ENCODE measurements at regions of chr7 and their contacts with region 1.

Region 1: GRCh38 chr7:50206453-50207250 is 97.9 kb upstream of the IKZF1 start:
- DNase-seq: peak; percentile 46 to 89 (median 78)
- ATAC-seq: peak; percentile 74
- H3K4me3 ChIP-seq: peak overlapping the region in 1 of 2 experiments; percentile 12
- H3K4me3 Mint-ChIP-seq: peak overlapping the region; percentile 80
- H3K27ac ChIP-seq: peak overlapping the region; percentile 3 to 37
- H3K27ac Mint-ChIP-seq: peak overlapping the region; percentile 92
- H3K4me1 ChIP-seq: peaks cover 74% of the 10 kb centered on the region
- H3K4me1 Mint-ChIP-seq: peaks cover 76% of the 10 kb centered on the region
- H3K27me3 ChIP-seq: no peaks in the 10 kb centered on the region
- H3K27me3 Mint-ChIP-seq: no peaks in the 10 kb centered on the region
- CTCF ChIP-seq: no peak

Region 2: DNA sequence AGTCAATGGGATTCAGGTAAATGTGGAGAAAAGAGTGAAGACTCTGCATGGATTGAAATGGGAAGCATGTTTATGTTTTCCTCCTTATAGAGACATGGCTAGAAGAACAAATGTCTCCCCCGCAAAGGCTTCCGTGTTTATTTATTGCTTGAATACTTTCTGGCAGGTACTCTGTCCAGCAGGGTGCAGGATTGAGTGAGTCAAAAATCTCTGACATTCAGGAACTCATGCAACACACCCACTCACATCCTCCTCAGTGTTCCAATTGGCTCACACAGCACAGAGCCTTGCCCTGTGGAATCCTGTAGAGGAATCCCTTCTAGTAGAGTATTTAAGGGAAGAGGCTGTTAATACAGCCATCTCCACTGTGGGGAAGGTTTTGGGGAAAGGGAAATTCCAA is 723.5 kb before region 1 on chr7:
- CTCF ChIA-PET with region 1: no interaction called
- POLR2A ChIA-PET with region 1: no interaction called
- intact Hi-C with region 1: no loop called
- DNase-seq: no peak
- ATAC-seq: no peak
- H3K4me3 ChIP-seq: no peak overlapping the region
- H3K4me3 Mint-ChIP-seq: no peak overlapping the region
- H3K27ac ChIP-seq: no peak overlapping the region
- H3K27ac Mint-ChIP-seq: no peak overlapping the region
- H3K4me1 ChIP-seq: no peaks in the 10 kb centered on the region
- H3K4me1 Mint-ChIP-seq: no peaks in the 10 kb centered on the region
- H3K27me3 ChIP-seq: no peaks in the 10 kb centered on the region
- H3K27me3 Mint-ChIP-seq: no peaks in the 10 kb centered on the region
- CTCF ChIP-seq: no peak

Region 3: GRCh38 chr7:50142425-50143017 is 64.1 kb before region 1 on chr7:
- CTCF ChIA-PET with region 1: interaction called, 19 read pairs
- POLR2A ChIA-PET with region 1: interaction called, 5 read pairs
- intact Hi-C with region 1: loop called (anchors 1 to 2 kb)
- DNase-seq: peak in 4 of 9 experiments; percentile 38 to 78 (median 59)
- ATAC-seq: peak; percentile 85
- H3K4me3 ChIP-seq: no peak overlapping the region
- H3K4me3 Mint-ChIP-seq: peak overlapping the region; percentile 57
- H3K27ac ChIP-seq: no peak overlapping the region
- H3K27ac Mint-ChIP-seq: peak overlapping the region; percentile 84
- H3K4me1 ChIP-seq: peaks cover 5% of the 10 kb centered on the region
- H3K4me1 Mint-ChIP-seq: peaks cover 15% of the 10 kb centered on the region
- H3K27me3 ChIP-seq: no peaks in the 10 kb centered on the region
- H3K27me3 Mint-ChIP-seq: no peaks in the 10 kb centered on the region
- CTCF ChIP-seq: peak; percentile 91

Region 4: GRCh38 chr7:50281680-50282445 is 75.2 kb after region 1 on chr7:
- CTCF ChIA-PET with region 1: interaction called, 18 read pairs
- POLR2A ChIA-PET with region 1: no interaction called
- intact Hi-C with region 1: loop called in 1 of 2 experiments (anchors 5 kb)
- DNase-seq: peak in 2 of 9 experiments; percentile 38 to 65
- ATAC-seq: peak; percentile 81
- H3K4me3 ChIP-seq: peak overlapping the region in 1 of 2 experiments; percentile 30
- H3K4me3 Mint-ChIP-seq: peak overlapping the region; percentile 80
- H3K27ac ChIP-seq: peak overlapping the region; percentile 45 to 62
- H3K27ac Mint-ChIP-seq: peak overlapping the region; percentile 96
- H3K4me1 ChIP-seq: peaks cover 53% of the 10 kb centered on the region
- H3K4me1 Mint-ChIP-seq: peaks cover 57% of the 10 kb centered on the region
- H3K27me3 ChIP-seq: no peaks in the 10 kb centered on the region
- H3K27me3 Mint-ChIP-seq: no peaks in the 10 kb centered on the region
- CTCF ChIP-seq: no peak

Region 5: GRCh38 chr7:50317221-50317678 is 110.6 kb after region 1 on chr7:
- CTCF ChIA-PET with region 1: interaction called, 186 read pairs
- POLR2A ChIA-PET with region 1: interaction called, 32 read pairs
- intact Hi-C with region 1: loop called in 1 of 2 experiments (anchors 1 kb)
- DNase-seq: peak in 4 of 9 experiments; percentile 54 to 93 (median 83)
- ATAC-seq: peak; percentile 72
- H3K4me3 ChIP-seq: peak overlapping the region; percentile 21 to 52
- H3K4me3 Mint-ChIP-seq: peak overlapping the region; percentile 26
- H3K27ac ChIP-seq: peak overlapping the region; percentile 91 to 96
- H3K27ac Mint-ChIP-seq: peak overlapping the region; percentile 96
- H3K4me1 ChIP-seq: peaks cover 98% of the 10 kb centered on the region
- H3K4me1 Mint-ChIP-seq: peaks cover 95% of the 10 kb centered on the region
- H3K27me3 ChIP-seq: no peaks in the 10 kb centered on the region
- H3K27me3 Mint-ChIP-seq: no peaks in the 10 kb centered on the region
- CTCF ChIP-seq: no peak

Region 6: DNA sequence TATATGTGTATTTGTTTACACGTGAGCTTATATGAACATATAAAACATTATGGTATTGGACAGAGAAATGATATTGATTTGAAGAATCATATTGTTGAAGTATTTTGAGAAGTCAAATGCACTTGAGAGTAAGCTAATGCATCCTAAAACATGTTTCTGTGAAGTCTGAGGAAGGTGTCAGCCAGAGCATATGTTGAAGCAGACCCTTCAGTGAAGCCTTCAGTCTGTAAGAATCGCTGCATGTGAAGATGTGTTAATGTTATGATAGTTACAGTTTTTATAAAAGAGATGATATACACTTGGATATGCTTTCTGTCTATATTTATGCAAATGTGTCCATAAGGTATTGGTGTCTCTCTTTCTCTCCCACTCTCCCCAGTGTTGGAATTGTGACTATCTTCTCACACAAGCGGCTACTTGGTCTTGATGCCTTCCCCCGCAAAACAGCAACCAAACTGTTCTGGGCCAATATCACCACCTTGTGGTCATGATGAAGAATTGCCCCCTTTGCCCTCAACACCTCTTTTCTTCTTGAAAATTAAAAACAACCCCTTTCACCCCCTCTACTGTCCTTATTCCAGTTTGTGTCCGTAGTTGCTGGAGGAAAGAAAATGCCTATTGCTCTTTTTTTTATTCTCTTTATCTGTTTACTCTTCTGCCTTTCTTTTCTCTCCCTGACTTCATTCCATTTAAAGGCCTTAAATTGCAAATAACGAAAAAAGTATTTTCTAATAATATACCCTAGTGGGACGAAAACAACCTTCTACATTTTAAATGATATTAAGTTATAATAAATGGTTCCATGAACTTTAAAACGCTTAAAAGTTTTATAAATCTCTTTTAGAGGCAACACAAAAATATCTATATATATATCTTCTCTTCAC is 162.7 kb after region 1 on chr7:
- CTCF ChIA-PET with region 1: interaction called, 339 read pairs
- POLR2A ChIA-PET with region 1: interaction called, 51 read pairs
- intact Hi-C with region 1: loop called (anchors 1 kb)
- DNase-seq: peak in 4 of 9 experiments; percentile 55 to 92 (median 73)
- ATAC-seq: peak; percentile 58
- H3K4me3 ChIP-seq: no peak overlapping the region
- H3K4me3 Mint-ChIP-seq: peak overlapping the region; percentile 44
- H3K27ac ChIP-seq: peak overlapping the region in 1 of 2 experiments; percentile 67
- H3K27ac Mint-ChIP-seq: peak overlapping the region; percentile 99
- H3K4me1 ChIP-seq: peaks cover 95% of the 10 kb centered on the region
- H3K4me1 Mint-ChIP-seq: peaks cover 95% of the 10 kb centered on the region
- H3K27me3 ChIP-seq: no peaks in the 10 kb centered on the region
- H3K27me3 Mint-ChIP-seq: no peaks in the 10 kb centered on the region
- CTCF ChIP-seq: peak; percentile 92

Region 7: GRCh38 chr7:50418086-50418515 is 211.4 kb after region 1 on chr7:
- CTCF ChIA-PET with region 1: interaction called, 153 read pairs
- POLR2A ChIA-PET with region 1: interaction called, 8 read pairs
- intact Hi-C with region 1: loop called (anchors 1 kb)
- DNase-seq: peak; percentile 43 to 85 (median 67)
- ATAC-seq: peak; percentile 97
- H3K4me3 ChIP-seq: no peak overlapping the region
- H3K4me3 Mint-ChIP-seq: no peak overlapping the region
- H3K27ac ChIP-seq: no peak overlapping the region
- H3K27ac Mint-ChIP-seq: no peak overlapping the region
- H3K4me1 ChIP-seq: peaks cover 20% of the 10 kb centered on the region
- H3K4me1 Mint-ChIP-seq: peaks cover 24% of the 10 kb centered on the region
- H3K27me3 ChIP-seq: no peaks in the 10 kb centered on the region
- H3K27me3 Mint-ChIP-seq: no peaks in the 10 kb centered on the region
- CTCF ChIP-seq: peak; percentile 73

Measured in CD8-positive, alpha-beta T cell (primary cell).